Prostate gland (tissue), 2 donors: ENCODE measurements at regions of chr3 and their contacts with region 1.

Region 1: DNA sequence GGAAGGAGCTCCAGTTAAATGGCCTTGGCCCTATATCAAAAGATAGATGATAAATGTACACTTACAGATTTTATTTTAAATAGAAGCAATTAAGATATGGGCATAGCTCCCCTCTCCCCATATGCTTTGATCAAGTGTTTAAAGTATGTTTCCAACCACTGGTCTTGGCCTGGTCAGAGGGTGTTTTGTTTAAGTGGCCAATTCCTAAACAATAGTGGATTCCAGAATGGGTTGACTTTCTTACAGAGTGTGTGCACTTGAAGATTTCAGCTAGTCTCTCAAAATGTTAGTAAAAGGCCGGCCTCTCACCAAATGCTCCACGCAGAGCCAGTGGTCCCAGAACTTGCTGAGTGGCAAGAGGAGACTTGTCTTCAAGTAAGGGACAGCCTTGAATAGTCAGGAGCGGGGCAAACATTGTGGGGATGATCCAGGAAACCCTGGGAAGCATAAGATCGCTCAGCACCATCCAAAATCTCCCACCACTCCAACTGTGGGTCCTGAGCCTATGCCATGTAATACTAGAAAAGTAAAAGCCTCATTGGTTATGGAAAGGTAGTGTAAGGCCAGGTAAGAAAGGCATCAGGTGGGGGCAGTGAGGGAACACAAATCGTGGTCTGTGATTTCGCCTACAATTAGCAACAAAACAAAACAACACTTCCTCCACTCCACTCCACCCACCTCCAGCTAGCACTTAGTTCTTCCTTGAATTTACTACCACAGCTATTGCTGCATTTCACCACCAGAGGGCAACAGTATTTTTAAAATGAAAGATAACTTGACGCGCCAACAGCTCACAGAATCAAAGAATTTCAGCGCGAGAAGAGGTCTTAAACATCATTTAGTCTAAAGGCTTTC is 4.8 kb downstream of the RARRES1 start:
- DNase-seq: peak; percentile 78
- H3K4me3 ChIP-seq: no peak overlapping the region
- H3K27ac ChIP-seq: peak overlapping the region; percentile 43 to 44
- H3K4me1 ChIP-seq: peaks cover 14% of the 10 kb centered on the region
- H3K27me3 ChIP-seq: no peaks in the 10 kb centered on the region
- CTCF ChIP-seq: peak; percentile 60 to 95 (median 84)
- POLR2A ChIP-seq: no peak

Region 2: DNA sequence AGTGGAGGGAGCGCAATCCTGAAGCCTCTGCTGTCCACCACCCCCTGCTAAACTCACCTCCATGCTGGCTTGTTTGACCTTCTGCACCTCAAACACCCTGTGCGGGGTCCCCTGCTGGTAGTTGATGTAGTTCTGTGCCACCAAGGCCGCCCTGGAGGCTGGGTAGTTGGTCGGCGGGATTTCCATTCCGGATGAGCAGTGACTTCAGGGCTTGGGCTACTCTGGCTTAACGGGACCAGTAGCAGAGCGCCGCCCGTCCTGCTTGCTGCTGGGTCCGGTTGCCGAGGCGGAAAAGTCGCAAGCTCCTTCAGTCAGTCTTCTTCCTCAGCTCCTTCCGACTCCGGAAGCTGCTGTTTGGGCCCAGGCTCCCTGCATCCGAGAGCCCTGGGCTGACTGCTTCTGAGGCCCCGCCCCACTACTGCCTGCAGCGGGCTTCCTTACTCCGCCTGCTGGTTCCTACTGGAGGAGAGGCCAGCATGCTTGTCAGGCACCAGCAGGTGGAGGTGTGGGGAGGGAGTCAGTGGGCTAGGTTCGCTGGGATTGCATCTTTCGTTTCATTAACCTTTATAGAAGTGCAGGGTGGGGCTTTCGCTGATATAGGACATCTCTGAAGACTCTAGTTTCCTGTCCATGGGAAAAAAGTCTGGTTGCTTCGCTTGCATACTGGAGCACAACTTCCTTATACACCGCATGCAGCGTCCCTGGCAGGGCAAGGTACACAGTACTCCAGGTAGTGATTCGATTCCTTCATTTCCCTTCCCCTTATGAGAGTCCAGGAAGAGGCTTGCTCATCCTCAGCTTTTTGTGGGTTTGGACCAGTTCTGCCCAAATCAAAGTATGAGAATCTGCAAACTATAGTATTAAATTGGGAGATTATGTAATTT is 54.9 kb before region 1 on chr3 and contains the start of gene LXN:
- intact Hi-C with region 1: loop called (anchors 5 kb)
- DNase-seq: peak; percentile 94
- H3K4me3 ChIP-seq: peak within 1 kb of the TSS; percentile 35 to 48
- H3K27ac ChIP-seq: peak within 1 kb of the TSS; percentile 79
- H3K4me1 ChIP-seq: no peaks in the 10 kb centered on the region
- H3K27me3 ChIP-seq: no peaks in the 10 kb centered on the region
- CTCF ChIP-seq: peak; percentile 47 to 91 (median 72)
- POLR2A ChIP-seq: peak; percentile 80
- total RNA-seq, gene LXN: 40.9 to 48.4 TPM

Region 3: DNA sequence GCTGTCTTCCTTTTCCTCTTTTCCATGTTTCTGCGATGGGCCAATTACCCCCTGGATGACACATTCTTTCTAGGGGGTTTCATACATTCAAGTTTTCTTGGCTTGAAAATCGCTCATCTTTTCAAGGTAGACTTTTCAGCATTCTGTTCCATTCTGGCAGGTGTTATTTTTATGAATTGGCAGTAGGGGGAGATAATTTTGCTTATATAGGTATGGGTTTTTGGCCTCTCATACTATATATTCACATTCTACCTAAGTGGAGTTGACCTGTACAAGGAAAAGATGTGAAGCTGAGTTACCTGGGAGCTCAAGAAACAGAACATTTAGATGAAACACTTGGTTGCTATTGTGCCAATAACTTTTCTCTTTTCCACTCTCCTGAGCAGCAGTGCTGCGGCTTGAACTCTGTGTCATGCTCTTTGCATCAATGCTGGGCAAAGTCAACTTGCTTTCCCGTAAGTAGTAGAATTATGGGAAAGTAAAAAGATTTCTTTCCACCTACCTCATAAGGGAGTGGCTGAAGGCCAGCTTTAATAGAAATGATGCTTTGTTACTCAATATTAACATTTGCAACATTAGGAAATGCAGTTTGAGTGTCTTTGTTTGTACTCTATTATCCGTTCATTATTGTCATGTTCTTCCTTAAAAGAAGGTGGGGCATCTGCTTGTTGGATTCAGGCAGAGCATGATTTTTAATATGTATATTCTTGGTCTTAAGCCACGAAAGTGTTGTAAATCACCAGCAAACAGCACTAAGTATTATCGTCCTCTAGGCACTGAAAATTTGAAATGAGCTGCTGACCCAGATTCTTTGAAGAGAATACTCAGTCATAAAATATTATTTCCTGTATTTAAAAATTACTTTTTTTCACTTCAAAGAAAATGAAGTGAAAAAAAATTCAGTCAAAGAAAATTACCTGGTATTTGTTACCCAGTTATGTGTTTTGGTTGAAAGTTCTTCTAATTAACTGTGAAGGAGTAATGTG is 46.7 kb after region 1 on chr3:
- intact Hi-C with region 1: loop called (anchors 5 kb)
- DNase-seq: peak; percentile 42
- H3K4me3 ChIP-seq: no peak overlapping the region
- H3K27ac ChIP-seq: peak overlapping the region; percentile 21 to 77
- H3K4me1 ChIP-seq: no peaks in the 10 kb centered on the region
- H3K27me3 ChIP-seq: no peaks in the 10 kb centered on the region
- CTCF ChIP-seq: no peak
- POLR2A ChIP-seq: peak; percentile 12

Region 4: DNA sequence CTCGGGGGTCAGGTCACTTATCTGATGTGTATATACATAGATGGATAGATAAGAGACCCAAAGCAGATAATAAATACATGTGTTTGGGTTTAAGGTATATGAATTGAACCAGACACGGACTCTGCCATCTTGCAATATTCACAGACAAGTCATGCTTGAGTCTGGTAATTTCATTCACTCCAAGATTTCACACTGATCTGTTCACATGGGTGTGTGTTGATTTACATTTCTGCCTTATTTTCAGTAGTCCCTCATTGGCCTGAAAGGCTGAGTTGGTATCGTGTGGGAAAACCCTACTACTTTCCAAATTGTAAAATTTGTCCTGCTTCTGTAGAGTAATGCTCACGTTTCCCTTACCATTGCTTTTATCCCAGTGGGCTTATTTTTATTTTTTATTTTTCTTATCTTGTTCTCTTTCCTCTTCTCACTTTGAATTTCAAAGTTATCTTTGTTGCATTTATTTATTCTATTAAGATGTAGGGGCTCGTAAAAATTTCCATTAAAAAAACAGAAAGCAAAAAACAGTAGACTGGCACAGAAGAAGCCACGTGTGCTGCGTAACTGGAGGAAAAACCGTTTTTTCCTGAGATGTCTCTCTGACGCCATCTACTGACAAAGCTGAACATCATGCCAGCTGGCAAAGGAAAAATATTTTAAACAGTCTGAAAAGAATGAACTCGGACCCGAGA is 63.6 kb after region 1 on chr3:
- intact Hi-C with region 1: loop called (anchors 2 kb)
- DNase-seq: no peak
- H3K4me3 ChIP-seq: no peak overlapping the region
- H3K27ac ChIP-seq: no peak overlapping the region
- H3K4me1 ChIP-seq: peaks cover 4% of the 10 kb centered on the region
- H3K27me3 ChIP-seq: no peaks in the 10 kb centered on the region
- CTCF ChIP-seq: peak; percentile 59 to 80 (median 74)
- POLR2A ChIP-seq: no peak